Colonic mucosa (tissue), 4 donors: ENCODE measurements at regions of chr19 and their contacts with region 1.

Region 1: DNA sequence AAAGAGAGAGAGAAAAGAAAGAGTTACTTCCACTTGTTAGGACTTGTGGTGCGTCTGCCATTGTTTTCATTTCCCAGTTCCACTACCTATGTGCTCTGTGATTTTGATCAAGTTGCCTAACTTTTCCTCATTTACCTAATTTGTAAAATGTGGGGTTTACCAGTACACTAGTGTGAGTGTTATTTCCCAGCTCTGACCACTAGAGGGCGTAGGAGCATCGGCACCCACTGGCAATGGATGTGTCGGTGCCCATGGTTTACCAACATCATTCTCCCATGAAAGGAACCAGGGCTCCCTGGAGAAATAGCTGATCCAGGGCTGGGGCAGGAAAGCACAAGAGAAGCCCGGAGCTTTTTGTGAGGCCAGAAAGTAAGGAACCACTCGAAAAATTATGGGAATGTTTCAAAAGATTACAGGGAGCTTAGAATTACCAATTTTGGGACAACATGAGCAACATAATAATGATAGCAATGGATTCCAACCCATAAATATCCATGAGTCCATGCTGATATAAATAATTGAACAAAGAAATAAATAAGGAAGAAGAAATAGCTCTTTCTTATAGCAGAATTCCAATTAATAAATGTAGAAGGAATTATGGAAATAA is 15.1 kb upstream of the CEACAM4 start:
- DNase-seq: peak; percentile 88
- H3K4me3 ChIP-seq: no peak overlapping the region
- H3K27ac ChIP-seq: no peak overlapping the region
- H3K4me1 ChIP-seq: no peaks in the 10 kb centered on the region
- H3K27me3 ChIP-seq: no peaks in the 10 kb centered on the region
- CTCF ChIP-seq: peak; percentile 91

Region 2: GRCh38 chr19:41363753-41364523 is 278.0 kb before region 1 on chr19 and contains the start of gene B9D2:
- intact Hi-C with region 1: no loop called
- DNase-seq: peak; percentile 98
- H3K4me3 ChIP-seq: peak within 1 kb of the TSS; percentile 49
- H3K27ac ChIP-seq: peak within 1 kb of the TSS; percentile 90
- H3K4me1 ChIP-seq: peaks cover 3% of the 10 kb centered on the region
- H3K27me3 ChIP-seq: no peaks in the 10 kb centered on the region
- CTCF ChIP-seq: no peak
- total RNA-seq, gene B9D2: 8.4 to 10.4 TPM

Region 3: GRCh38 chr19:41595258-41595889 is 46.6 kb before region 1 on chr19:
- intact Hi-C with region 1: no loop called
- DNase-seq: peak; percentile 56
- H3K4me3 ChIP-seq: no peak overlapping the region
- H3K27ac ChIP-seq: no peak overlapping the region
- H3K4me1 ChIP-seq: no peaks in the 10 kb centered on the region
- H3K27me3 ChIP-seq: no peaks in the 10 kb centered on the region
- CTCF ChIP-seq: peak; percentile 71

Region 4: DNA sequence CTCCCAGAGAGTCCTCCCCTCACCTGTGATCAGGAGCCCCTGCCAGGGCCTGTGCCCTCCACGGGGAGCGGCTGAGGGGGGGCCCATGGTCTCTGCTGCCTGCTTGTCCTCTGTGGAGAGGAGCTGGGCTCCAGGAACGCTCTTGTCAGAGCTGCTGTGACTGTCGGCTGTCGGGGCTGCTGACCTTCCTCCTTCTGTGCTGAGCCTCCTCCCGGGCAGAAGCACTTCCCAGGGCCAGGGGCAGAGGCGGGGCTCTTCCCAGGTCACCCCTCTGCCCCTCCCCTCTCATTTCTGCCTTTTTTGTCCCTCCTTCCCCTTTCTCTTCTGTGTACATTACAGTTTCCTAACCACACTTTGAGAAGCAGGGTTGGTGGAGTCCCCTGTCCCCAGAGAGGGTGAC is 15.1 kb before region 1 on chr19 and contains the start of gene CEACAM4:
- intact Hi-C with region 1: no loop called
- DNase-seq: no peak
- H3K4me3 ChIP-seq: no peak within 1 kb of the TSS
- H3K27ac ChIP-seq: no peak within 1 kb of the TSS
- H3K4me1 ChIP-seq: no peaks in the 10 kb centered on the region
- H3K27me3 ChIP-seq: no peaks in the 10 kb centered on the region
- CTCF ChIP-seq: no peak
- total RNA-seq, gene CEACAM4: not detected

Region 5: GRCh38 chr19:41691268-41691970 is 49.4 kb after region 1 on chr19:
- intact Hi-C with region 1: loop called (anchors 5 kb)
- DNase-seq: peak; percentile 55
- H3K4me3 ChIP-seq: no peak overlapping the region
- H3K27ac ChIP-seq: no peak overlapping the region
- H3K4me1 ChIP-seq: no peaks in the 10 kb centered on the region
- H3K27me3 ChIP-seq: no peaks in the 10 kb centered on the region
- CTCF ChIP-seq: peak; percentile 64

Region 6: DNA sequence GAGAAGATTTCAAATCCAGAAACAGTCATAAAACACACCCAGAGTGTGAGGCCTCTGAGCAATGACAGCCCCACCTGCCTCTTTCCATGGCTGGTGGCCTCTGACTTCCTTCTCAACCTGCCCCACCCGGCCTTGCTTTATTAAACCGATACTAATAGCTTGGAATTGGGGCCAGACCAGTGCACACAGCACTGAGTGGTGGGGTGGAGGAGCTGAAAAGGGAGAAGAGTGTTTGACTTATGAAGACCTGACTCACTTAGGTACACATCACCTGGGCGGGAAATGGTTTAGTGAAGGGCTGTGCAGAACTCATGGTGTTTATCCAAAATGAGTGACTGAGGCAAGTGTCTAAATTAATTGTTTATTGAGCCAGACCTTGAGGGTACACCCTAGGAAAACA is 92.6 kb after region 1 on chr19:
- intact Hi-C with region 1: no loop called
- DNase-seq: peak; percentile 90
- H3K4me3 ChIP-seq: no peak overlapping the region
- H3K27ac ChIP-seq: peak overlapping the region; percentile 86
- H3K4me1 ChIP-seq: peaks cover 8% of the 10 kb centered on the region
- H3K27me3 ChIP-seq: no peaks in the 10 kb centered on the region
- CTCF ChIP-seq: no peak

Region 7: DNA sequence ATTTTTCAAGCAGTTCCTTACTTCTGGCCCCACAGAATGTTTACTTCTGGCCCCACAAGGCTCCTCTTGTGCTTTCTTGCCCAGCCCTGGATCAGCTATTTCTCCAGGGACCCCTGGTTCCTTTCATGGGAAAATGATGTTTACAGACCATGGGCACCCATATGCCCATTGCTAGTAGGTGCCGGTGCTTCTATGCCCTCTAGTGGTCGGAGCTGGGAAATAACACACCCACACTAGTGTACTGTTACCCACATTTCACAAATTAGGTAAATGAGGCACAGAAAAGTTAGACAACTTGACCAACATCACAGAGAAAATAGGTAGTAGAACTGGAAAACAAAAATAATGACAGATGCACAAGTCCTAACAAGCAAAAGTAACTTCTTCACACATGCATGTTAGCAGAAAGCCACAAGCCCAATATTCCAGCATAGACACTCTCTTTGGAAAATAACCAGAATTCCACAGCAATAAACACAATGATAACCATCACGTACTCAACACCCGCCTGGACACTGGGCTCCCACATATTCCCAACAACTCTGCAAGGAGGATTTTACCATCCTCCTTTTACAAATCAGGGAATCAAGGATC is 112.1 kb after region 1 on chr19:
- intact Hi-C with region 1: loop called (anchors 10 kb)
- DNase-seq: peak; percentile 86
- H3K4me3 ChIP-seq: no peak overlapping the region
- H3K27ac ChIP-seq: no peak overlapping the region
- H3K4me1 ChIP-seq: peaks cover 10% of the 10 kb centered on the region
- H3K27me3 ChIP-seq: no peaks in the 10 kb centered on the region
- CTCF ChIP-seq: peak; percentile 60